ENCODE measurements at regions of chr1 and their contacts with region 1.

Region 1: DNA sequence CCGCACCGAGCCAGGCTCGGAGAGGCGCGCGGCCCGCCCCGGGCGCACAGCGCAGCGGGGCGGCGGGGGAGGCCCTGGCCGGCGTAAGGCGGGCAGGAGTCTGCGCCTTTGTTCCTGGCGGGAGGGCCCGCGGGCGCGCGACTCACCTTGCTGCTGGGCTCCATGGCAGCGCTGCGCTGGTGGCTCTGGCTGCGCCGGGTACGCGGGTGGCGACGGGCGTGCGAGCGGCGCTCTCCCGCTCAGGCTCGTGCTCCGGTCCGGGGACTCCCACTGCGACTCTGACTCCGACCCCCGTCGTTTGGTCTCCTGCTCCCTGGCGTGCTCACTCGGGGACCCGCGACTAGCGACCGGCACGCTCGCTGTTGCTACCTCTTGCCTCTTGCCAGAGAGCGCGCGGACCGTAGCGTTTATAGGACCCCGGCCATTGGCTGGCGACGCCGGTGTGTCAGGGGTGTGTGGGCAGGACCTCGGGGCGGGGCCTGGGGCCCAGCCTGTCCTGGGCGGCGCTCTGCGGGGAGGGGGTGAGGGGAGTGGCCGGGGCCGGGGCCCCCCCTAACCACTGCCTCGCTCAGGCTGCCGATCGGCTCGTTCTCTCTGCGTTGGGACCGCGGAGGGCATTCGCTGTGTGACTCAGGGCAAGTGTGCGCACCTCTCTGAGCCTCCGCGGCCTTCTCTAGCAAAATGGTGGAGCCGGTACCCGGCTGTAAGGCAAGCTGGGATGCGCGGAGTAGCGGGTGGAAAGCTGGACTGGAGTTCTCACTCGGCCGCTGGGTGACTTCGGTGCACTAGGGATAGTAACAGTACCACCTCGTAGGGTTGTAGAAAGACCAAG is at the start of gene SLC2A1:
- DNase-seq: peak; percentile 99
- ATAC-seq: peak; percentile 89
- H3K4me3 Mint-ChIP-seq: peak within 1 kb of the TSS; percentile 89
- H3K27ac Mint-ChIP-seq: peak within 1 kb of the TSS; percentile 97
- H3K4me1 Mint-ChIP-seq: peaks cover 47% of the 10 kb centered on the region
- H3K27me3 Mint-ChIP-seq: peaks cover 6% of the 10 kb centered on the region
- total RNA-seq, gene SLC2A1: 115 to 125 TPM

Region 2: DNA sequence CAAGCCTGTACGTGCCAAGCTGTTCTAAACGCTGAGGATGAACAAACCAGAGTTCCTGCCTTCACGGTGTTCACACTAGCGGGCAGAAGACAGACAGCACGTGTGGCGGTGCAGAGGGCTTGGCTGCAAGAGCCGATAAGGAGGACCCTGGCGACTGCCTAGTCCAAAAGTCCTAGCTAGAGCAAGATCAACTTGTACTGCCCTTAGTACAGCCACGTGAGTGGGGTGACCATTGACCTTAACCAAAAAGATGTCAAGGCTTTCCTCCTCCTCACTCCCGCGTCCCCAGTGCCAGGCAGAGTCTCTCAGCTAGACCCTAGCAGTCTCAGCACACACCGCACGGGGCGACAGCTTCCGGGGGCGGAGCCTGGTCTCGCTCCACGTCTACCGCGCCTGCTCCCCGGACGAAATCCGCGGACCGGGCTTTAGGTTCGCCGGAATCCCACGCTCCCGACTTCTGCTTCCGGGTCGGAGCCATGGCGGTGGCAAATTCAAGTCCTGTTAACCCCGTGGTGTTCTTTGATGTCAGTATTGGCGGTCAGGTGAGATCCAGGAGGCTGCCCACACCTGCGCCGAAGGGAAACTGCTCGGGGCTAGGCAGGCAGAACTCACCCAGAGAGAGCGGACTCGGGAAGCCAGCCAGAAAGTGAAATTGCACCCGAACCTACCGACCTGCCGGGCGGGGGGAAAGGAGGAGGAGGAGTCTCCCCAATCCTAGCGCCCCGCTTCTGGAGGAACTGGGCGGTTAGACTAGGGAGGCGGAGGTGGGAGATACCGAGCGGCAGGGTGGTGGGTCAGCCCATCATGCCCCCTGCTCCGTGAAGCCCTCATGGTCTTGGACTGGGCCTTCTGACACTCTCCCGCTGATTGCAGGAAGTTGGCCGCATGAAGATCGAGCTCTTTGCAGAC is 300.5 kb before region 1 on chr1 and contains the start of gene PPIH:
- CTCF ChIA-PET with region 1: no interaction called
- POLR2A ChIA-PET with region 1: no interaction called
- intact Hi-C with region 1: loop called in 1 of 2 experiments (anchors 1 kb)
- DNase-seq: peak; percentile 98
- ATAC-seq: peak; percentile 97
- H3K4me3 Mint-ChIP-seq: peak within 1 kb of the TSS; percentile 97
- H3K27ac Mint-ChIP-seq: peak within 1 kb of the TSS; percentile 97
- H3K4me1 Mint-ChIP-seq: peaks cover 39% of the 10 kb centered on the region
- H3K27me3 Mint-ChIP-seq: no peaks in the 10 kb centered on the region
- total RNA-seq, gene PPIH: 111 to 114 TPM

Region 3: DNA sequence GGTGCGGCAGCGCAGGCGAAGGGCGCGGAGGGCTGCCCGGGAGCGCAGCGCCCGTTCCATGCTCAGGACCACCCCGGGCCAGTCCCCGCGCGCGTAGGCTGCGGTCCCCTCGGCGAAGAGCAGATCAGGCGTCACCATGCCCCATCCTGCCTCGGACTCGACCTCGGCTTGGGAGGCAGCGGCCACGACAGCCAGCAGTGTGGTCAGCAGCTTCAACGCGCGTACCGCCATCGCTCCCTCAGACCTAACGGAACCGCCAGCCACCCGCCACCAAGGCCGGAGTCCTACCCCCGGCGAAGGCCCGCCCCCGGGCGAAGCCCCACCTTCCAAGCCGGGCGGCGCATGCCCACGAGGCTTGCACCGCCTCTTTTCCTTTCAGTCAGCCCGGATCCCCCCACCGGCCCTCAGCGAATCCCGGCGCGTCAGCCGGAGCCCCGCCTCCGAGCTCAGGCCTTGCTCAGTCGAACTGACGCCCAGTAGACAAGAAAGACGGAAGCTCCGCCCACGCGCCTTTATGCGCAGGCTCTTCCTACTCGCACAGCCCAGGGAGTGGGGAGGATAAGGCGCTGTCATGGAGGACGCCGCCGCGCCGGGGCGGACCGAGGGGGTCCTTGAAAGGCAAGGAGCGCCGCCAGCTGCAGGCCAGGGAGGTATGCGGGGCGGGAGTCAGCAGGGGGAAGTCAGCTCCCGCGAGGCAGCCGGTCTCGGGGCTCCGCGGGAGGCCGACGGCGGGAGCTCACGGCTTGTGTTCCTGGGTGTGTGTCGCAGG is 191.8 kb before region 1 on chr1 and contains the starts of genes C1orf50 and P3H1:
- CTCF ChIA-PET with region 1: no interaction called
- POLR2A ChIA-PET with region 1: interaction called, 6 read pairs
- intact Hi-C with region 1: loop called (anchors 1 to 2 kb)
- DNase-seq: peak; percentile 100
- ATAC-seq: peak; percentile 96
- H3K4me3 Mint-ChIP-seq: no peak within 1 kb of the TSS
- H3K27ac Mint-ChIP-seq: peak within 1 kb of the TSS; percentile 85
- H3K4me1 Mint-ChIP-seq: peaks cover 36% of the 10 kb centered on the region
- H3K27me3 Mint-ChIP-seq: no peaks in the 10 kb centered on the region
- total RNA-seq, gene C1orf50: 4.0 to 8.0 TPM
- total RNA-seq, gene P3H1: 24.3 to 28.8 TPM

Region 4: GRCh38 chr1:42931108-42931539 is 27.6 kb before region 1 on chr1:
- CTCF ChIA-PET with region 1: interaction called, 6 read pairs
- POLR2A ChIA-PET with region 1: interaction called, 5 read pairs
- intact Hi-C with region 1: loop called (anchors 1 kb)
- DNase-seq: peak; percentile 64
- ATAC-seq: peak; percentile 31
- H3K4me3 Mint-ChIP-seq: peak overlapping the region; percentile 62
- H3K27ac Mint-ChIP-seq: peak overlapping the region; percentile 92
- H3K4me1 Mint-ChIP-seq: peaks cover 63% of the 10 kb centered on the region
- H3K27me3 Mint-ChIP-seq: no peaks in the 10 kb centered on the region

Region 5: DNA sequence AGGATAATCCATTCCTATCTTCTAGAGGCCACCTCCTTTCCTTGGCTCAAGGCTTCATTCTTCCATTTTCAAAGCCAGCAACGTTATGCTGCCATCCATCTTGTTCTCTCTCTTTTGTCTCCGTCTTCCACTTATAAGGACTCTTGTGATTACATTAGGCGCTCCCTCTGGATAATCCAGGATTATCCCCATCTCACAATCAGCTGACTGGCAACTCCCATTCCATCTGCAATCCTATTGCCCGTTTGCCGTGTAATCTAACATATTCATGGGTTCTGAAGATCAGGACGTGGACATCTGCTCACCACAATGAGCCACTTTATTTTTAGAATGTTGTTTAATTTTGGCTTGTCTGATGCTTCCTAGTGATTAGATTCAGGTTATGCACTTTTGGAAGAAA is 124.0 kb after region 1 on chr1:
- CTCF ChIA-PET with region 1: no interaction called
- POLR2A ChIA-PET with region 1: no interaction called
- intact Hi-C with region 1: no loop called
- DNase-seq: no peak
- ATAC-seq: no peak
- H3K4me3 Mint-ChIP-seq: no peak overlapping the region
- H3K27ac Mint-ChIP-seq: no peak overlapping the region
- H3K4me1 Mint-ChIP-seq: no peaks in the 10 kb centered on the region
- H3K27me3 Mint-ChIP-seq: peaks cover 10% of the 10 kb centered on the region

Region 6: DNA sequence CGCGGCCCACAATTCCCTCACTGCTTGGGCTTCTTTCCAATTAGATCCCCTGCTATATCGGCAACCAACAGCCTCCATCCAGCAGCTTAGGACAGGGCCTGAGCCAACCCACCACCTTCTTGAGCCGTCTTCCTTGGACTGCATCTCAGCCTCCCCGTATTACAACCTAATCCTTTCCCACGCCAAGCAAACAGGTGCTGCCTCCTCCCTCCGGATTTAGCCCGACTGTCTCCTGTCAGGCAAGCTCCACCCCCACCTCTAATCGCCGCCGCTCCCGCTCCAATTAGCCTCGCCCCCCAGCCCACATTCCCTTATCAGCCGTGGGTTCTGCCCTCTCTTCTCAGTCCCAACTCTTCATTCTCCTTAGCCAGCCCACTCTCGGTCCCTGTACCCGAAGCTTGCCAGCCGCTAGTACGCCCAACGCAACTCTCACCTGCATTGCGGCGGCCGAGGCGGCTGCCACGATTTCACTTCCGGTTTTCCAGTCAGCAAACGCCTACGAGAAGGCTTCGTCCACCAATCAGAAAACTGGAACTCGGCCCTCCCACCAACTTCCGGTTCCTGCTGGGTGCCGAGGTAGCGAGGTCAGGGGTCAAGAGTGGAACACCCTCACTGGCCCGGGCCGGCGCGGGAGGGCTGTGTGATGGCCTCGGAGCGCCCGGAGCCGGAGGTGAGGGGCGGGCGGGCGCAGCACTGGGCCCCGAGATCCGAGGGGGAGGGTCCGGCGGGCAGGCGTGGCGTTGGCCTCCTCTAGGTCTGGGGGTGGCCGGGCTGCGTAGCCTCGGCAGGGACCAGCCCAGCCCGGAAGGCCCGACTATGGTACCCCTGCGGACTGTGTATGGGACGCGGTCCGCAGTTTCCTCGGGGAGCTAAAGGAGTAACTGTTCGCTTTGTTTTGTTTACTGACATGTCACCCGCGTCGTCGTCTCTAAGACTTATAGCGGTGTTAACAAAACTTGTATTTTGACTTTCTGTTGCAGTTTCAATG is 430.9 kb after region 1 on chr1 and contains the starts of genes MED8 and SZT2:
- CTCF ChIA-PET with region 1: no interaction called
- POLR2A ChIA-PET with region 1: no interaction called
- intact Hi-C with region 1: loop called in 1 of 2 experiments (anchors 5 kb)
- DNase-seq: peak; percentile 94
- ATAC-seq: peak; percentile 93
- H3K4me3 Mint-ChIP-seq: peak within 1 kb of the TSS; percentile 99
- H3K27ac Mint-ChIP-seq: peak within 1 kb of the TSS; percentile 97
- H3K4me1 Mint-ChIP-seq: peaks cover 39% of the 10 kb centered on the region
- H3K27me3 Mint-ChIP-seq: no peaks in the 10 kb centered on the region
- total RNA-seq, gene MED8: 32.3 to 36.6 TPM
- total RNA-seq, gene SZT2: 33.6 to 36.3 TPM

Measured in activated CD4-positive, alpha-beta T cell treated with anti-CD3 and anti-CD28 coated beads for 36 hours (primary cell).